Common myeloid progenitor, CD34-positive (primary cell): ENCODE measurements at regions of chr10 and their contacts with region 1.

Region 1: DNA sequence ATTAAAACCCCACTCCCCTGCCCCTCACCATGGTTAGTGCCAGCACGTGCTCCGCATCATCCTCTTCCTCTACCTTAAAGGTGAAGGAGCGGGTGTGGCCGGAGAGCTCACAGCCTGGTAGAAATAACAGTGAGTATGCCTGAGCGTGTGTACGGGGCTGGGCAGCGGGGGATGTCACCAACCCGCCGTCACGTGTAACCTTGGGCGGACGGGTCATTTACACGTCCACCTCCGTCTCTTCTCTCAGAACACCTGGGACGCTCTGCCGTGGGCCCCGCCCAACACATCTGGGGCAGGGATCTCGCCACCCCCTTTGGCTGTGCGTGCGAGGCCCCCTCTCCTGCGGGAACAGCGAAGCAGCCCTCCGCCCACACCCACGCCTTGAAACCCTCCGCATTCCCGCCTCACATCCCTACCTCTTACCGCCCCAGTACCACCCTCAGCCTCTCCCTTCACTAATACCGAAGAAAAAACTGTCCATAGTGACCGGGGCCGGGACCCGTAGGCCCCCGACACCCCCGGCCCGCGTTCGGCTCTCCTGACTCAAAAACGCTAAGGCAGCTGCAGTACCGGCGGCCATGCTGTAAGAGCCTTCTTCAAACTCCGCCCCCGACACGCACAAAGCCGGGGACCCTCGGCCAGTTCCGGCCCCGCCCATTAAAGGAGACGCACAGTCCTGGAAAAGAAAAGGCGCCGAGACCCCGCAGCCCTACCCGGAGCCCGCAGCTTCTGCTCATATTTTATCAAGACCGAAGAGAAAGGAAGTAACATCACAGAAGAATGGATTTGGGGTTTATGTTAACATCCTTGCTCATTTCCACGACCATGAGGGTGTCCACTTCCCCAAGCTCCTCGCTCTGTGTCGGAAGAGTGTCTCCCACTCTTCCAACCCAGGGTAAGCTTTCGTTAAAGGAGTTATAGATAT is at the start of gene NPM3:
- DNase-seq: peak; percentile 67 to 88 (median 84)
- H3K4me3 ChIP-seq: peak within 1 kb of the TSS; percentile 66 to 93 (median 86)
- H3K27ac ChIP-seq: peak within 1 kb of the TSS; percentile 46 to 76
- H3K4me1 ChIP-seq: peaks cover 0 to 42% (median 41%) of the 10 kb centered on the region in 4 experiments
- H3K27me3 ChIP-seq: peaks cover 0 to 18% (median 12%) of the 10 kb centered on the region in 5 experiments

Region 2: DNA sequence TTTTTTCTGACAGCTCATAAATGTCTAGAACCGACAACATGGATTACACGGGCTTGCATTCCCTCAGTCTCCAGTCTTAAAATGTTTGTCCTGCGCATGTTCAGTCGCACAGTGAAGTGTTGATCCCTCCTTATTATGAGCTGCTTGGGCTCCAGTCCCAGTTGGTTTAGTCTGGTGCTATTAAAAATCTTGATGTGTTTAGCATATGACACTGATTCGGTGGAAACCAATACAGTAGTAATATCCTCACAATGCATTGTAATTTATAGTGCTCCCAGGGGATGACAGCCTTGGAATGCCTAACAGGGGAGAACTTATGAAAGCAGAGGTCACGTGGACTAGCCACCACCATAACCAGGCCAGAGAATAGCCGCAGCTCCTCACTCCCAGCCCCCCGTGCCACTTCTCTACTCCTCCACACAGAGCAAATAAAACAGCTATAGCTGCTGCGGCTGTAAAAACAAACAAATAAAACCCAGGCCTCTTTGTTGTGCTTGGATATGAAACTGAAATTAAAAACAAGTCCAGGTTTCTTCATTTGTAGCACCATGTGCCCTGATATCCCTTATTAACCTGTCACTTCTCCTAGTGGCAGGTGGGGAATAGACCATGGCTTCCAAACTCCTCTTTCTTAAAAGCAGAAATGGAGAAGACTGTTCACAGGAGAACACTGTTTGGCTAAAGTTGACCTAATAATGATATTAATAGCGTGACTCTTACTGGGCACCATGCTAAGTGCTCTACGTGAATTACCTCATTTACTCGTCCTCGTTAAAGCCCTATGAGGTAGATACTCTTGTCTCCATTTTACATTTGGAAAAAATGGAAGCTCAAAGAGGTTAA is 187.3 kb before region 1 on chr10:
- CTCF ChIA-PET with region 1: interaction called, 88 read pairs
- POLR2A ChIA-PET with region 1: no interaction called
- DNase-seq: no peak
- H3K4me3 ChIP-seq: no peak overlapping the region
- H3K27ac ChIP-seq: no peak overlapping the region
- H3K4me1 ChIP-seq: peaks cover 0 to 5% (median 1%) of the 10 kb centered on the region in 4 experiments
- H3K27me3 ChIP-seq: no peaks in the 10 kb centered on the region

Region 3: GRCh38 chr10:101602761-101603398 is 180.2 kb before region 1 on chr10:
- CTCF ChIA-PET with region 1: interaction called, 88 read pairs
- POLR2A ChIA-PET with region 1: no interaction called
- DNase-seq: peak; percentile 78 to 90 (median 89)
- H3K4me3 ChIP-seq: no peak overlapping the region
- H3K27ac ChIP-seq: no peak overlapping the region
- H3K4me1 ChIP-seq: no peaks in the 10 kb centered on the region
- H3K27me3 ChIP-seq: no peaks in the 10 kb centered on the region

Region 4: GRCh38 chr10:101797403-101798059 is 14.5 kb after region 1 on chr10:
- CTCF ChIA-PET with region 1: interaction called, 19 read pairs
- POLR2A ChIA-PET with region 1: interaction called, 3 read pairs
- DNase-seq: no peak
- H3K4me3 ChIP-seq: no peak overlapping the region
- H3K27ac ChIP-seq: no peak overlapping the region
- H3K4me1 ChIP-seq: no peaks in the 10 kb centered on the region
- H3K27me3 ChIP-seq: no peaks in the 10 kb centered on the region

Region 5: DNA sequence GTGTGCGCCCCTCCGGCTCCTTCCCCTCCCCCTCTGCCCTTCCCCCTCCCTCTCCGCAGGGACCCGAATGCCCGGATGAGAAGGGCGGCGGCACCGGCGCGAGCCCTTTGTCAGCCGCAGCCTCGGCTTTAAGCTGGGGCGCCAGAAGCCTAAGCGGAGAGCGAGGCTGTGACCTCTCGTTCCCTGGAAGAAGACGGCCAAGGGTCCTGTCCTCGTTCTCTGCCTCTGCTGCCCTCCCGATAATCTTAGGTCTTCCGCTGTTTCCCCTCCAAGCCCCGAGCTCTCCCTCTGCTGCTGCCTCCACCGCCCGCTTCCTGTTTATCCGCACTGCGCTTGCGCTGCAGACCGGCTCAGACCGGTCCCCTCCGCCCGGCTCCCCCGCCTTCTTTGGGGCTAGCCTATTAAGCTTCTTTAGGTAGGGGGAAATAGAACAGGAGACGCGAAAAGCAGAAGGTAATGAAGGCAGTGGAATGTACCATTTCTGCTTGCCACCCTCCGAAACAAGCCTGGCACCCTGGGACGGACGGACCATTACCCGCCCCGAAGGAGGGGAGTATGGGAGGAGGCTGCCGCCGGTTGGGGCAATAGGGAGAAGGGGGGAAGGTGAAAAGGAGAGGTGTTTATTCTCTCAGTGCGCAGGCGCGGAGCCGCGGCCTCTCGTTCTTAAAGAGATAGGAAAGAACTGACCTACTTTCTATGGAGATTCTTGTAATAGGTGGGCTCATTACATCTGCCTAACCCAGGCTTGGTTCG is 35.2 kb after region 1 on chr10 and contains the start of gene OGA:
- CTCF ChIA-PET with region 1: interaction called, 11 read pairs
- POLR2A ChIA-PET with region 1: no interaction called
- DNase-seq: peak; percentile 100
- H3K4me3 ChIP-seq: peak within 1 kb of the TSS; percentile 83 to 98 (median 96)
- H3K27ac ChIP-seq: peak within 1 kb of the TSS; percentile 81 to 89
- H3K4me1 ChIP-seq: peaks cover 19 to 48% (median 30%) of the 10 kb centered on the region in 4 experiments
- H3K27me3 ChIP-seq: no peaks in the 10 kb centered on the region